AG04449 (cell line): ENCODE measurements at regions of chr17 and their contacts with region 1.

Region 1: DNA sequence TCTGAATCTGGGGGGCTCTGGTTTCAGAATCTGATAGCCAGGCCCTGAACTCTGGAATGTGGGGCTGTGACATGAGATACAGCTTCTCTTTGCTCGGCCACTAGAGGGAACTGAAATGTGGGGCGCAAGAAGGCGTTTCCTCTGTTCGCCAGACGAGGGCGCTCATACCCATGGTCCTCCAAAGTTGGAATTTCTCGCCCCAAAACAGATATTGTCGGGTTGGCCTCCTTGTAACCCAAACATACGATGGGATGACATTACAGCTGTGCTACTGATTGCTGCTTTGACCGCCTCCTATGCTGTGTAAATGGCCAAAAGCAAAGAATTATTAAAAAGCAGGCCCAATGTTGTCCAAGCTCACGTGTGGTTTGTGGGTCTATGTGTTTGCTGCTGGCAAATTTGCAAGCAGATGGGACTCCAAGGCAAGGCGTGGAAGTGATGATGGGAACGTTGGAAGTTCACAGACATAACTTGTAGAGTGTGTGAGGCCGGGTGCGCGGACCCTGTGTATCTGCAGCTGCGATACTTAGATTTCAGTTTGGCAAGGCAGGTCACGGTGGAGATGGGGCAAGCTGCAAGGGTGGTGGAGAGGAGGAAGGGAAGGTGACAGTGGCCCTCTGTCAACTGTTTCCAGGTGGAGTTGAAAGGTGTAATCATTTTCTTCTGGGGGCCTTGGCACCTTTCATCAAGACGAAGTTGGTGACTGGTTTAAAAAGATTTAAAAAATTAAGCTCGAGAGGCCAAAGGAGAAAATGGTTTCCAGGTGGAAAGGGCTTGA is 13.0 kb upstream of the MSI2 start:
- DNase-seq: peak; percentile 1
- H3K4me3 ChIP-seq: no peak overlapping the region
- CTCF ChIP-seq: peak; percentile 99

Region 2: DNA sequence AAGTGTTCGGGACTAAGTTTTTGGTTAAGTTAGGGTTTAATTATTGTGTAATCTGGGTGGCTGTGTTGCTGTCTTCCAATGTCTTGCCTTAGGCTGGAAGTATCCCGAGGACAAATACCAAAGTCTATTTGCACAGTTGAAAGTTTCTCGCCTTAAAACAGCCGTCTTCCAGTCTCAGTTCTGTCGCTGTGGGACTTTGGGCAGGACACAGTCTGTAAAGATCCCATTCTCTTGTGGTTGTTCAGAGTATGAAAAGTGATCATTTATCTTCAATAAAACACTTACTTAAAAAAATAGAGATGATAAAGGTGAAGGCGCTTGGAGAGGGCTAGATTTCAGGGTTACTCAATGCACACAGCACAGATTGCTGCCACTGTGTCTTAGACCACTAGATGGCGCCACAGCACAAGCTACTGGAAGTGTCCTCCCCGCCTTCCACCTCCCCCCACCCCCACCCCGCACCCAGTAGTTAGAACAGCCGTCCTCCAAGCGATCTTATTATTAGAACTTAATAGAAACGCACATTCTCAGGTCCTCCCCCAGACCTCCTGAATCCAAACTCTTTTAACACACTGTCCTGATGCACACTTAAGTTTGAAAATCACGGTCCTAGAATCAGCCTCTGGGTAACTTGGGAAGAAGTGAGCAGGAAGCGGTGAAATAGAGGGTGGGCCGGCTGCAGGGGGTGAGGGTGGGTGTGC is 112.4 kb before region 1 on chr17:
- CTCF ChIA-PET with region 1: interaction called, 14 read pairs
- POLR2A ChIA-PET with region 1: no interaction called
- DNase-seq: peak; percentile 16
- H3K4me3 ChIP-seq: peak overlapping the region; percentile 44
- CTCF ChIP-seq: peak; percentile 86

Region 3: GRCh38 chr17:57440522-57441485 is 197.4 kb after region 1 on chr17:
- CTCF ChIA-PET with region 1: interaction called, 13 read pairs
- POLR2A ChIA-PET with region 1: no interaction called
- DNase-seq: no peak
- H3K4me3 ChIP-seq: no peak overlapping the region
- CTCF ChIP-seq: peak; percentile 14

Region 4: GRCh38 chr17:57511430-57512123 is 268.2 kb after region 1 on chr17:
- CTCF ChIA-PET with region 1: interaction called, 11 read pairs
- POLR2A ChIA-PET with region 1: no interaction called
- DNase-seq: no peak
- H3K4me3 ChIP-seq: no peak overlapping the region
- CTCF ChIP-seq: no peak

Region 5: GRCh38 chr17:57577751-57578607 is 334.6 kb after region 1 on chr17:
- CTCF ChIA-PET with region 1: interaction called, 12 read pairs
- POLR2A ChIA-PET with region 1: no interaction called
- DNase-seq: no peak
- H3K4me3 ChIP-seq: peak overlapping the region; percentile 12; the same call in 1 of the 2 replicates
- CTCF ChIP-seq: no peak

Region 6: GRCh38 chr17:57671667-57672632 is 428.6 kb after region 1 on chr17:
- CTCF ChIA-PET with region 1: interaction called, 119 read pairs
- POLR2A ChIA-PET with region 1: interaction called, 3 read pairs
- DNase-seq: peak; percentile 47
- H3K4me3 ChIP-seq: no peak overlapping the region
- CTCF ChIP-seq: peak; percentile 97

Region 7: GRCh38 chr17:57823469-57824401 is 580.4 kb after region 1 on chr17:
- CTCF ChIA-PET with region 1: interaction called, 12 read pairs
- POLR2A ChIA-PET with region 1: no interaction called
- DNase-seq: no peak
- H3K4me3 ChIP-seq: no peak overlapping the region
- CTCF ChIP-seq: no peak